ENCODE measurements at regions of chr10 and their contacts with region 1.

Region 1: DNA sequence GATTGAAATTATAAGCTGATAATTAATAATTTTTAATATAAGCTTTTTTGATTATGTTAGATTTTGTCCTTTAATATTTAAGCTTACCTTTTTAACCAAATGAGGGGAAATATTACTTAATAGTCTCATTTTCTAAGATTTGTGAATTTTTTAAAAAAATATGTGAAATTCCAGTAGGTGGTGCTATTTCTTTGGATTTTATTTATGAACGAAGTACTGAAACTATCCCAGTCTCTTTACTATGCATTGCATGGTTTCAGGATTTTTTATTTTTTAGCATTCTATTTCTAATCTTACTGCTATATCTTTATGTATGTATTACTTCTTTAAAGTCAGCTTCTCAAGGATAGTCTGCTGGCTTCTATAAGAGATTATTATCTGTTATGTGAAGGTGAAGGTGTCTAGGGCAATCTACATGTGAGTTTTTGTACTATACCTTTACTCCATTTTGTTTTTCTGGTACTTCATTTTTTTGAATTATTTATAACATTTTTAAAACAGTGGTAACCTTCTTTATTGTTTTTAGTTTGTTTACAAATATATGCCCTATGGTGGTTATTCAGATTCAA is 78.3 kb downstream of the ATRNL1 start:
- DNase-seq: no peak
- H3K4me3 Mint-ChIP-seq: no peak overlapping the region
- H3K27ac Mint-ChIP-seq: no peak overlapping the region
- H3K4me1 Mint-ChIP-seq: no peaks in the 10 kb centered on the region
- H3K27me3 Mint-ChIP-seq: peaks cover under 1% of the 10 kb centered on the region

Region 2: GRCh38 chr10:115417585-115418265 is 246.2 kb after region 1 on chr10:
- intact Hi-C with region 1: loop called (anchors 10 kb)
- DNase-seq: no peak
- H3K4me3 Mint-ChIP-seq: no peak overlapping the region
- H3K27ac Mint-ChIP-seq: no peak overlapping the region
- H3K4me1 Mint-ChIP-seq: no peaks in the 10 kb centered on the region
- H3K27me3 Mint-ChIP-seq: no peaks in the 10 kb centered on the region

Measured in activated T-helper 2 cell treated with anti-CD3 and anti-CD28 coated beads, Interferon-gamma antibody, Interleukin-2, Interleukin-4, amounts not matched to agents 10 μg/mL and 5 μg/mL and 100 μg/mL, durations not matched to agents 14 hours and 24 hours and 36 hours (primary cell).